WTC11 (cell line): ENCODE measurements at regions of chr17 and their contacts with region 1.

Region 1: GRCh38 chr17:50783193-50783660 is 15.9 kb upstream of the ANKRD40CL start:
- DNase-seq: peak; percentile 95
- ATAC-seq: peak; percentile 99
- H3K4me3 Mint-ChIP-seq: no peak overlapping the region
- H3K27ac Mint-ChIP-seq: no peak overlapping the region
- H3K4me1 Mint-ChIP-seq: peaks cover 6% of the 10 kb centered on the region; the same call in 1 of the 2 replicates
- H3K27me3 Mint-ChIP-seq: no peaks in the 10 kb centered on the region
- CTCF ChIP-seq: peak; percentile 99

Region 2: GRCh38 chr17:50771991-50772785 is 11.0 kb before region 1 on chr17:
- CTCF ChIA-PET with region 1: interaction called, 70 read pairs
- POLR2A ChIA-PET with region 1: no interaction called
- DNase-seq: no peak
- ATAC-seq: no peak
- H3K4me3 Mint-ChIP-seq: no peak overlapping the region
- H3K27ac Mint-ChIP-seq: no peak overlapping the region
- H3K4me1 Mint-ChIP-seq: peaks cover 5% of the 10 kb centered on the region; the same call in 1 of the 2 replicates
- H3K27me3 Mint-ChIP-seq: no peaks in the 10 kb centered on the region
- CTCF ChIP-seq: no peak

Region 3: GRCh38 chr17:50816771-50817751 is 33.8 kb after region 1 on chr17:
- CTCF ChIA-PET with region 1: interaction called, 15 read pairs
- POLR2A ChIA-PET with region 1: no interaction called
- DNase-seq: peak; percentile 55
- ATAC-seq: peak; percentile 79
- H3K4me3 Mint-ChIP-seq: no peak overlapping the region
- H3K27ac Mint-ChIP-seq: no peak overlapping the region
- H3K4me1 Mint-ChIP-seq: peaks cover 10% of the 10 kb centered on the region
- H3K27me3 Mint-ChIP-seq: no peaks in the 10 kb centered on the region
- CTCF ChIP-seq: peak; percentile 69

Region 4: DNA sequence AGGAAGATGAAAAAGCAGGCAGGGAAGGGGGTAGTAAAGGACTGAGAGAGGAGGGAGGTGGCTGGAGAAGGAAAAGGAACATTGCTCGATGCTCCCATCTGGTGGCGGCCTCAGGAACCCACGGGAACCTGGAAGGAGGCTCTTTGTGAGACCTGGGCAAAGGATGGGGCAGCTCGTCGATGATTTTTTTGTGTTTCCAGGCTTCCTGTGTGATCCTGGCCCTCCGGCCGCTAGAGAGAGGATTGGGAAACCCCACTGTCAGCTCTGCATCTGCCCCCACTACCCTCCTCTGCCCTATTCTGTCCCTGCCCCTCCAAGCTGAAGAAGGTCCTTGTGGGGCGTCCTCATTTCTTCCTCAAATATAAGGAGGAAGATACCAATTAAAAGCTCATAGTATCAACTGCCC is 58.7 kb after region 1 on chr17:
- CTCF ChIA-PET with region 1: interaction called, 233 read pairs
- POLR2A ChIA-PET with region 1: interaction called, 6 read pairs
- DNase-seq: peak; percentile 83
- ATAC-seq: peak; percentile 90
- H3K4me3 Mint-ChIP-seq: no peak overlapping the region
- H3K27ac Mint-ChIP-seq: no peak overlapping the region
- H3K4me1 Mint-ChIP-seq: peaks cover 9% of the 10 kb centered on the region
- H3K27me3 Mint-ChIP-seq: no peaks in the 10 kb centered on the region
- CTCF ChIP-seq: 0 out of 2 replicates have a peak, but pooled peaks have one; percentile 44

Region 5: DNA sequence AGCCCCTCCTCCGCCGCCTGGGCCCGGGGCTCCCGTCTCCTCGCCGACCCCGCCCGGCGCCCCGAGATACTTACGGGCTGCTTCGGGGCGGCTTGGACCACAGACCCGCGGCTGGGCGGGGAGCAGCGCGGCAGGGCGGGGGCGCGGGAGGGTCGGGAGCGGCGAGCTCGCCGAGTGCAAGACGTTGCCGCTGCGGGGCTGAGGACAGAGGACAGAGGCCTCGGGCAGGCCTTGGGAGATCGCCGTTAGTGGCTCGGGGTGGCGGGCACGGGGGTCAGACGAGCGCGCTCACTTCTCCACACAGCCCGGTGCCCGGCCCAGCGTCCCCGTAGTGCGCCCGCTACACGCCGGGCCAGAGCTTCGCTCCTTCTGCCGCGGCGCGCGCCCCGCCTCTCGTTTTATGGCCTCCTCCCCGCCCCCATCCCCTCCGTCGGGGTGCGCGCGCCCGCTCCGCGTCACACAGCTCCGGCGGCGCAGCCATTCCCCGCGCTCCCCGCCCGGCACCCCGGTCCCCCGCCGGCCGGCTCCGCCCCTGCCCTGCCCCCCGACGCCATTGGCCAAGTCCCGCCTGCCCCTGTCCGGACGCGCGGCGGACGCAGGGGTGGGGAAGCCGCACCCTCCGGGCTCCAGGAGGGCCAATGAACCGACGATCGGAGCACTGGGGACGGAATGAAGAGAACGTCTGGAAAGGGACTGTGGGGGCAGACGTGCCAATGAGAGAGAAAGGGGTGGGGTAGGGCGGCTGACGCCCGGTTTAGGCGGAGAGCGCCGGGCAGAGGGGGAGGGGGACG is 83.0 kb after region 1 on chr17 and contains the start of gene TOB1:
- CTCF ChIA-PET with region 1: interaction called, 25 read pairs
- POLR2A ChIA-PET with region 1: interaction called, 3 read pairs
- DNase-seq: peak; percentile 97
- ATAC-seq: peak; percentile 78
- H3K4me3 Mint-ChIP-seq: peak within 1 kb of the TSS; percentile 96
- H3K27ac Mint-ChIP-seq: peak within 1 kb of the TSS; percentile 100
- H3K4me1 Mint-ChIP-seq: peaks cover 30% of the 10 kb centered on the region
- H3K27me3 Mint-ChIP-seq: no peaks in the 10 kb centered on the region
- CTCF ChIP-seq: no peak
- total RNA-seq, gene TOB1: 33.5 to 37.9 TPM (median 36.0 TPM) in 3 replicates

Region 6: DNA sequence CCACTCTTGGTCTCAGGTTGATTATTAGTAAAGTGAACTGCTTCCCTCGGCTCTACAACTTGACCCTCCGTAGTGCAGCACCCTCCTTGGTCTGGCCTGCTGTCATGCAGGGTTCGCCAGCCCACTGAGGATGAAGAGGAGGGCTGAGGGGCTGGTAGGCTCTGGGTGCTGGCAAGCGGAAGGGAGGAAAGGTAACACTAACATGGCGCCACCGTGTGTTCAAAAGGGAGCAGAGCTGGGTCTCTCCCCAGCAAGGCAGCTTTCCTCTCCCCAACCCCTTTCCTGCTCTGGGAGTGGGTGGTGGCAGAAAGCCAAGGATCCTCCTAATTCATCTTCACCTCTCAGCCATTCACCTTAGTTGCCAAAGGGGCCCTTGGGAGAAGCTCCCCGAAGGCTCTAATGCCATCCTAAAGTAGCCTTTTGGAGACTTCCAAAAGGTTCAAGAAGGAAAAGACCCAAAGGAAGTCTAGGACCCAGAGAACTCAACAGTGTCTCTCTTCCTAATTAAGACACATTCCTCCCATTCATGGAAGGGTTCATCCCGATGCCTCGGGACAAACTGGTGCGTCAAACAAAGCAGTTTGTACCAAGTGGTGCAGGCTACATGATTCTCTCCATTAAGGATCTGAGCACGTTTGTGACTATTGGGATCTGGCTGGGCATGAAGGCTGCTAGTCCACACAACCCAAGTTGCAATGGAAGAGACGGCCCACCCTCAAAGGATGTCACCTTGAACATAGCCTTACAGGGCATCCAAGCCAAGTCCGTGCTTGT is 173.7 kb after region 1 on chr17:
- CTCF ChIA-PET with region 1: interaction called, 85 read pairs
- POLR2A ChIA-PET with region 1: no interaction called
- DNase-seq: peak; percentile 79
- ATAC-seq: peak; percentile 89
- H3K4me3 Mint-ChIP-seq: no peak overlapping the region
- H3K27ac Mint-ChIP-seq: 0 out of 2 replicates have a peak overlapping the region, but pooled peaks have one; percentile 19
- H3K4me1 Mint-ChIP-seq: peaks cover 36% of the 10 kb centered on the region
- H3K27me3 Mint-ChIP-seq: no peaks in the 10 kb centered on the region
- CTCF ChIP-seq: peak; percentile 44; the same call in 1 of the 2 replicates

Region 7: GRCh38 chr17:51097708-51098446 is 314.6 kb after region 1 on chr17:
- CTCF ChIA-PET with region 1: no interaction called
- POLR2A ChIA-PET with region 1: no interaction called
- DNase-seq: no peak
- ATAC-seq: no peak
- H3K4me3 Mint-ChIP-seq: no peak overlapping the region
- H3K27ac Mint-ChIP-seq: no peak overlapping the region
- H3K4me1 Mint-ChIP-seq: no peaks in the 10 kb centered on the region
- H3K27me3 Mint-ChIP-seq: no peaks in the 10 kb centered on the region
- CTCF ChIP-seq: no peak